ENCODE measurements at regions of chr19 and their contacts with region 1.

Region 1: GRCh38 chr19:19488875-19489690 is 26.3 kb downstream of the TSSK6 start:
- DNase-seq: peak; percentile 97
- H3K4me3 Mint-ChIP-seq: peak overlapping the region; percentile 57
- H3K27ac Mint-ChIP-seq: peak overlapping the region; percentile 95
- H3K4me1 Mint-ChIP-seq: peaks cover 51% of the 10 kb centered on the region
- H3K27me3 Mint-ChIP-seq: no peaks in the 10 kb centered on the region

Region 2: GRCh38 chr19:19192078-19192882 is 296.8 kb before region 1 on chr19 and contains the starts of genes BORCS8 and RFXANK:
- CTCF ChIA-PET with region 1: interaction called, 5 read pairs
- POLR2A ChIA-PET with region 1: no interaction called
- intact Hi-C with region 1: loop called (anchors 1 kb)
- DNase-seq: peak; percentile 100
- H3K4me3 Mint-ChIP-seq: peak within 1 kb of the TSS; percentile 96
- H3K27ac Mint-ChIP-seq: peak within 1 kb of the TSS; percentile 96
- H3K4me1 Mint-ChIP-seq: peaks cover 38% of the 10 kb centered on the region
- H3K27me3 Mint-ChIP-seq: no peaks in the 10 kb centered on the region
- total RNA-seq, gene BORCS8: 16.4 to 17.8 TPM
- total RNA-seq, gene RFXANK: 73.7 to 78.1 TPM

Region 3: GRCh38 chr19:19361075-19361594 is 127.9 kb before region 1 on chr19:
- CTCF ChIA-PET with region 1: interaction called, 215 read pairs
- POLR2A ChIA-PET with region 1: interaction called, 5 read pairs
- intact Hi-C with region 1: loop called (anchors 1 kb)
- DNase-seq: peak; percentile 88
- H3K4me3 Mint-ChIP-seq: no peak overlapping the region
- H3K27ac Mint-ChIP-seq: no peak overlapping the region
- H3K4me1 Mint-ChIP-seq: peaks cover 29% of the 10 kb centered on the region
- H3K27me3 Mint-ChIP-seq: no peaks in the 10 kb centered on the region

Region 4: GRCh38 chr19:19372656-19373416 is 116.2 kb before region 1 on chr19:
- CTCF ChIA-PET with region 1: interaction called, 215 read pairs
- POLR2A ChIA-PET with region 1: interaction called, 7 read pairs
- intact Hi-C with region 1: no loop called
- DNase-seq: peak; percentile 66
- H3K4me3 Mint-ChIP-seq: peak overlapping the region; percentile 59
- H3K27ac Mint-ChIP-seq: peak overlapping the region; percentile 93
- H3K4me1 Mint-ChIP-seq: peaks cover 6% of the 10 kb centered on the region
- H3K27me3 Mint-ChIP-seq: no peaks in the 10 kb centered on the region

Region 5: DNA sequence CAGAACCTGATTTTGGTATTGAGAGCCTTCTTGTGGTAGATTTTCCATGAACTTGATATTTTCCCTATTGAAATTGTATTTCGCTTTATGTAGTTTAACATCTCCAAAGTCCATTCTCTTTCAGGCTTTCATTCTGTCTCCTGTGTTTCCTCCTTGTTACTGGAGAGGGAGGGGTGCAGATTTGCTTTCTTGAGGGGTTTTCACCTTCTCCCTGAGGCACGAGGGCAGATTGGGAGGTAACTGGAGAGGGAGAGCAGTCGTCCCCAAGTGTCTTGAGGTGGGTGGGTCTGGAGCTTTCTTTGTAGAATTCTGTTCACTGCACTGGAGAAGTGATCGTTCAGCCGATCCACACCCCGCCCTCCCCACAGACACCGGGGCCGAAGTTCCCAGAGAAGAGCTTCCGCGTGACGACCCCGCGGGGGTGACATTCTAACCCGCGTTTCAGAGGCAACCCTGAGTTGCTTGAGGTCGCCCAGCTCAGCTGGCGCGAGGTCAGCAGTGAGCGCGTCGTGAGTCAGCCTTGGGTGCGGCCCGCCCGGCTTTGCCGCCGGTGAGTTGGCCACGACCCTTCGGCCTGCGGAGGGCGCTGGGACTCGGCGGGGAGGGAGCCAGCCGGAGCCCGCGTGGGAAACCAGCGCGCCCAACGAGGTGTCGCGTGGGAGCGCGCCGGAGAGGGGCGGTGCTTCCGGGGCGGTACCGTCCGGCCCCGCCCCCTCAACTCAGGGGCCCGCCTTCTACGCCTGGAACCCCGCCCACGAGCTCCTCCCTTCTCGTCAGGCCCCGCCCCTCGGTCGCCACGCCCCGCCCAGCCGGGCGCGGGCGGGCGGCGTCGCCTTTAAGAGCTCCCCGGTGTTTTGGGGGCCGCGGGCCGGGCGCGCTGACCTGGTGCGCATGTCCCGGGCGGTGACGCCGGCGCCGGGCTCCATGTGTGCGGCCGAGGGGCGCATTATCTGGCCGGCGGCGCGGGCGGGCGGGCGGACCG is 83.9 kb before region 1 on chr19 and contains the start of gene GATAD2A:
- CTCF ChIA-PET with region 1: interaction called, 36 read pairs
- POLR2A ChIA-PET with region 1: interaction called, 23 read pairs
- intact Hi-C with region 1: loop called (anchors 1 kb)
- DNase-seq: peak; percentile 94
- H3K4me3 Mint-ChIP-seq: peak within 1 kb of the TSS; percentile 95
- H3K27ac Mint-ChIP-seq: peak within 1 kb of the TSS; percentile 93
- H3K4me1 Mint-ChIP-seq: peaks cover 62% of the 10 kb centered on the region
- H3K27me3 Mint-ChIP-seq: no peaks in the 10 kb centered on the region
- total RNA-seq, gene GATAD2A: 114 TPM

Region 6: GRCh38 chr19:19445911-19446361 is 43.1 kb before region 1 on chr19:
- CTCF ChIA-PET with region 1: interaction called, 4 read pairs
- POLR2A ChIA-PET with region 1: no interaction called
- intact Hi-C with region 1: loop called (anchors 2 kb)
- DNase-seq: peak; percentile 39
- H3K4me3 Mint-ChIP-seq: peak overlapping the region; percentile 51
- H3K27ac Mint-ChIP-seq: peak overlapping the region; percentile 82
- H3K4me1 Mint-ChIP-seq: peaks cover 71% of the 10 kb centered on the region
- H3K27me3 Mint-ChIP-seq: no peaks in the 10 kb centered on the region

Region 7: DNA sequence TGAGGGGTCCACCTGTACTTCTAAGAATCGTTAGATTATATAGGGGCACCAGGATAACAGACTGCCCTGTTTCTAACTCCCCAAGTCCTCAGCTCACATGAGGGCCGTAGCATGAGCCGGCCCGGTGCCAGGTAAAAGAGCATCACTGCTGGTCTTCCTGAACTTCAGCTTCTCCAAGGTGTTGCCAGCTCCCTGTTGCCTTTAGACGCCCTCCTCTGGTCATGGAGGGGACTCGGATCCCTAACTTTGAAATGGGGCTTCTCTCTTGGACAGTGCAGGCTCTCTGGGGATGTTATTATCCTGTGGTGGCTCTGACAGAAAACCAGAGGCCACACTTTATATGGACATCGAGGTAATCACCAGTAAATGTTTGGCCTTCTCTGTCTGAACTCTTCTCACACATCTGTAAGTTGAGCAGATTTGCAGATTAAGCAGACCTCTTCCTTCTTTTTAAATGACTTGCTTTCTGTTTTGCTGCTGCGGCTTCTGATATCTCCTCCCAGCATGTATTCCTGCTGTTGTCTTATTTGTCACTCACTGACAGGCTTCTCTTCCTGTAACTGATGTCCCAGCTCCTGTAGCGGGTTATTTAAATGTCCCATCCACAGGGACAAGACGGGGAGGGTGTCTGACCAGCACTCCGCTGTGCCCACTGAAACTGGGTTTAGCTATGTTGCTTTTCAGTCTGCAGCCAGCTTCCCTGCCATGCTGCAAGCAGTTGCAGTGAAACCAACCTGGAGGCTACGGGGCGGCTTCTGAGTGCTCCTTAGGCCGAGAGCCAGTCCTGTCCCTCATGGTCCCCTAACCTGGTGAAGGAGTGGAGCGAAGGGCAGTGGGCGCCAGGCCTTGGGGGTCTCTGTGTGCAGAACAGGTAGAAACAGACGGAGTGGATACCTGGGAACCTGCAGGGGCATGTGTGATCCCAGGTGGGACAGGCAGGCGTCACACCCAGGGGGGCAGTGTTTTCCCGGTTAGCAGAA is 12.9 kb before region 1 on chr19:
- CTCF ChIA-PET with region 1: interaction called, 10 read pairs
- POLR2A ChIA-PET with region 1: interaction called, 3 read pairs
- intact Hi-C with region 1: no loop called
- DNase-seq: no peak
- H3K4me3 Mint-ChIP-seq: no peak overlapping the region
- H3K27ac Mint-ChIP-seq: peak overlapping the region; percentile 61
- H3K4me1 Mint-ChIP-seq: peaks cover 86% of the 10 kb centered on the region
- H3K27me3 Mint-ChIP-seq: no peaks in the 10 kb centered on the region

Region 8: GRCh38 chr19:19526581-19527370 is 37.7 kb after region 1 on chr19:
- CTCF ChIA-PET with region 1: no interaction called
- POLR2A ChIA-PET with region 1: no interaction called
- intact Hi-C with region 1: no loop called
- DNase-seq: no peak
- H3K4me3 Mint-ChIP-seq: no peak overlapping the region
- H3K27ac Mint-ChIP-seq: no peak overlapping the region
- H3K4me1 Mint-ChIP-seq: peaks cover 6% of the 10 kb centered on the region
- H3K27me3 Mint-ChIP-seq: no peaks in the 10 kb centered on the region

Region 9: DNA sequence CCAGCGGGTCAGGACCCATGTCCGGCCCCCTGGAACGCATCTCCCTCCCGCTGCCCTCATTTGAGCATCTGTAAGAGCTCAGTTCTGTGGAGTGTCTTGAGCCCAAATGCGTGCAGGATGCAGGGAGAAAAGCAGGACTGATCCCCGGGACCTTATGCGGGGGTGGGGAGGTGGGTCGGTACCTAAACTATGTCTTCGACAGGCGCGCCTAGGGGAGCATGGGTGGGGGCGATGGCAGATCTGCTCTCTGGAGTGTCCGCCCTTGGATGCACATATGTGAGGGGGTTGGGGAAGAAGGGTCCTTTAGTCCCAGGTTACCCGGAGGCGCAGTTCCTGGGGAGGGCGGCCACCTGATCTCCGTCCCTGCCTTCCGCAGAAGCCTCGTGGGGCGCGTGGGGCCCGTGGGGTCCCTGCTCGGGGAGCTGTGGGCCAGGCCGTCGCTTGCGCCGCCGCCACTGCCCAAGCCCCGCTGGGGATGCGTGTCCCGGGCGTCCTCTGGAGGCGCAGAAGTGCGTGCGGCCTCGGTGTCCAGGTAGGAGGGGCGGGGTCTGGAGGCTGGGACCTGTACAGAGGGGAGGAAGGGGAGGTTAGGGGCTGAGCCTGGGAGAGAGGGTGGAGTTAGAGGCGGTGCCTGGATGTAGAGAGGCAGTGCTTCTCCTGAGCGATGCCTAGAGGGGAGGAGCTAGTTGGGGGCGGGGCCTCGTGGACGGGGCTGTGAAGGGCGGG is 51.8 kb after region 1 on chr19:
- CTCF ChIA-PET with region 1: no interaction called
- POLR2A ChIA-PET with region 1: no interaction called
- intact Hi-C with region 1: no loop called
- DNase-seq: peak; percentile 91
- H3K4me3 Mint-ChIP-seq: peak overlapping the region; percentile 70
- H3K27ac Mint-ChIP-seq: no peak overlapping the region
- H3K4me1 Mint-ChIP-seq: peaks cover 26% of the 10 kb centered on the region
- H3K27me3 Mint-ChIP-seq: peaks cover 5% of the 10 kb centered on the region

Region 10: GRCh38 chr19:19704836-19705235 is 215.8 kb after region 1 on chr19:
- CTCF ChIA-PET with region 1: no interaction called
- POLR2A ChIA-PET with region 1: no interaction called
- intact Hi-C with region 1: no loop called
- DNase-seq: no peak
- H3K4me3 Mint-ChIP-seq: no peak overlapping the region
- H3K27ac Mint-ChIP-seq: no peak overlapping the region
- H3K4me1 Mint-ChIP-seq: no peaks in the 10 kb centered on the region
- H3K27me3 Mint-ChIP-seq: no peaks in the 10 kb centered on the region

Measured in activated CD4-positive, alpha-beta memory T cell treated with anti-CD3 and anti-CD28 coated beads for 36 hours (primary cell).